PC-3 (cell line): ENCODE measurements at regions of chr17 and their contacts with region 1.

Region 1: GRCh38 chr17:72126563-72127486 is 6.0 kb downstream of the SOX9 start:
- DNase-seq: peak; percentile 91
- ATAC-seq: peak; percentile 44
- H3K4me3 ChIP-seq: no peak overlapping the region
- H3K27ac ChIP-seq: peak overlapping the region; percentile 66
- H3K4me1 ChIP-seq: peaks cover 39% of the 10 kb centered on the region
- H3K27me3 ChIP-seq: no peaks in the 10 kb centered on the region
- CTCF ChIP-seq: 0 out of 2 replicates have a peak, but pooled peaks have one; percentile 15

Region 2: DNA sequence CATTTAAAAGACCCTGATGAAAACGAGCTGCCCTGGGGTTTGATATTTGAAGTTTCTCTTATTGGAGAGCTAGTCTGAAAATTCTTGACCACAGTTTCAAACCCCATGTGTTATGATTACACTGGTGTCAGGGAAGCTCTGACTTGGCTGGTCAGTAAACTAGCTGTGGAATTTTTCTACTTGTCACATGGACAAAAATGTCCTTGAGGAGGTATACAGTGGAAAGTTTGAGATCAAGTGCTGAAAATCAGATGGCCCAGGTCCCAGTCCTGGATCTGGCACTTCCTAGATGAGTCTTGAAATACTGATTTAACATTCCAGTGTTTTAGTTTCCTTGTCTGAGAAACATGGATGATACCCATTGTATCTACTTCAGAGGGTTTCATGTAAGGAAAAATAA is 36.7 kb before region 1 on chr17:
- CTCF ChIA-PET with region 1: no interaction called
- POLR2A ChIA-PET with region 1: no interaction called
- intact Hi-C with region 1: no loop called
- DNase-seq: no peak
- ATAC-seq: no peak
- H3K4me3 ChIP-seq: no peak overlapping the region
- H3K27ac ChIP-seq: no peak overlapping the region
- H3K4me1 ChIP-seq: no peaks in the 10 kb centered on the region
- H3K27me3 ChIP-seq: no peaks in the 10 kb centered on the region
- CTCF ChIP-seq: no peak

Region 3: GRCh38 chr17:72151565-72152391 is 25.0 kb after region 1 on chr17:
- CTCF ChIA-PET with region 1: no interaction called
- POLR2A ChIA-PET with region 1: interaction called, 3 read pairs
- intact Hi-C with region 1: loop called (anchors 1 kb)
- DNase-seq: peak; percentile 97
- ATAC-seq: peak; percentile 92
- H3K4me3 ChIP-seq: peak overlapping the region; percentile 45
- H3K27ac ChIP-seq: peak overlapping the region; percentile 80
- H3K4me1 ChIP-seq: peaks cover 23% of the 10 kb centered on the region
- H3K27me3 ChIP-seq: no peaks in the 10 kb centered on the region
- CTCF ChIP-seq: no peak

Region 4: DNA sequence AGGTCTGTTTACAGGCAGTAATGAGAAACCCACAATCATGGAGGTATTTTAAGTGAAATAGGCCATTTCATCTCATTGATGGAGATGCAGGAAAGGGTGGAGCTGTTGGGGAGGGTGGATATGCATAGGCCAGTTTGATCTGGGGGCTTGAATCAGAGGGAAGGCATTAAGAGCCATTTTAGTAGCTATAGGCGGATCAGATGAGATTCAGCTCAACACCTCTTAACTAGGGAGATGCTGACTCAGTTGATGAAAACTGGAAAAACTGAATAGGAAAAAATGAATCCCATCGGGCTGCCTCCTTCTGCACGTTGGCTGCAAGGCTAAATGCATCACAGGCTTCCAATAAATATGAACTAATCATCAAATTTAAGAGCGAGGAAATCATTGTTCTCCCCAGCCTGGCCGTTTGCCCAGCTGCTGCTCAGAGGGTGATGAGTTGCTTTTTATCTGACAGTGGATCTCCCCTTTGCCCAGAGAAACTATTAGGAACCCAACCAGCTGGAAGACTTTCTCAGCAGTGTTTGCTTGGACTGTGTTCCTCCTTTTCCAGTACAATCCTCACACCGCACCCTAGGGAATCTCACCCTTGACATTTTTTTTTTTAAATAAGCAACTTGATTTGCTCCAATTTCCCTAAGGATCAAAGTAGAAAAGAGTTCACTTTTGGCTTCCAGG is 143.6 kb after region 1 on chr17:
- CTCF ChIA-PET with region 1: no interaction called
- POLR2A ChIA-PET with region 1: no interaction called
- intact Hi-C with region 1: loop called (anchors 1 kb)
- DNase-seq: peak; percentile 98
- ATAC-seq: peak; percentile 96
- H3K4me3 ChIP-seq: peak overlapping the region; percentile 14; the same call in 1 of the 2 replicates
- H3K27ac ChIP-seq: peak overlapping the region; percentile 91
- H3K4me1 ChIP-seq: peaks cover 33% of the 10 kb centered on the region
- H3K27me3 ChIP-seq: no peaks in the 10 kb centered on the region
- CTCF ChIP-seq: no peak

Region 5: DNA sequence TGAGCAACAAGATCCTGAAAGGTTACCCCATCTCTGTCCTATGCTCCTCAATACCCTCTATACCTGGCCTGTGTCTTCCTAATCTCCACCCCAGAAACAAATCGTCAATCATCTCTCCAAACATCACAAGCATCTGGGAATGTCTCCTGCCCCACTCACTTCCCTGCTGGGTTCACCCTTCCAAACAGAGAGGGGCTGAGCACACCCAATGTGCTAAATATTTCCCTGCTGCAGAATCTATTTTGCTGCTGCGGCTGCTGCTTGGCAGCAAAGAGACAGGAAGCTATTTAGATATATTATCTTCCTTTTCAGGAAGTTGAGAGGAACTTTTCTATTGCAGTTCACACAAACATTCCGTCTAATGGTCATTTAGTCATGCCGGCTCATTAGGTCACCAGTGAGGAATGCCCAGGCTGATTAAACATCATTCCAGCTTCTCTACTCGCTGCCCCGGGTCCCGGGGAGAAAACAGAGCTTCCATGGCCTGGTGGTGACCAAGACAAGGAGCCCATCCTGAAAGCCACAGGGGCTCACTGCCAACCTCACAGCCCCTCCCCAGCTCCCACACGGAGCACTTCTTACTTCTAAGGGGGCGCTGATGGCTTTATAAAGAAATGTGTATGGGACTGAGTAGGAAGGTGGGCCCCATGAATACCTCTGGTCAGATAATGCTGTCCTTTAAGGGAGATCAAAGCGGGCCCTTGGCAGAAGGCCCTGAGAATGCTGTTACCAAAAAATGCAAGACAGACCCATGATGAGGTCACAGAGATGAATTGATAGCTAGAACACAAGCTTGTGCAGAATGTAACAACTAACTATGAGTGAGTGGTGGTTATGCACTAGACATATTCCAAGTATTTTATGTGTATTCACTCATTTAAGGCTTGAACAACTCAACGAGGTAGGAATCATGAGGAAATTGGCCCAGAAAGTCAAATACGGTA is 212.3 kb after region 1 on chr17:
- CTCF ChIA-PET with region 1: no interaction called
- POLR2A ChIA-PET with region 1: interaction called, 4 read pairs
- intact Hi-C with region 1: loop called (anchors 2 kb)
- DNase-seq: peak; percentile 97
- ATAC-seq: peak; percentile 93
- H3K4me3 ChIP-seq: peak overlapping the region; percentile 22; the same call in 1 of the 2 replicates
- H3K27ac ChIP-seq: peak overlapping the region; percentile 84
- H3K4me1 ChIP-seq: peaks cover 26% of the 10 kb centered on the region
- H3K27me3 ChIP-seq: no peaks in the 10 kb centered on the region
- CTCF ChIP-seq: no peak

Region 6: DNA sequence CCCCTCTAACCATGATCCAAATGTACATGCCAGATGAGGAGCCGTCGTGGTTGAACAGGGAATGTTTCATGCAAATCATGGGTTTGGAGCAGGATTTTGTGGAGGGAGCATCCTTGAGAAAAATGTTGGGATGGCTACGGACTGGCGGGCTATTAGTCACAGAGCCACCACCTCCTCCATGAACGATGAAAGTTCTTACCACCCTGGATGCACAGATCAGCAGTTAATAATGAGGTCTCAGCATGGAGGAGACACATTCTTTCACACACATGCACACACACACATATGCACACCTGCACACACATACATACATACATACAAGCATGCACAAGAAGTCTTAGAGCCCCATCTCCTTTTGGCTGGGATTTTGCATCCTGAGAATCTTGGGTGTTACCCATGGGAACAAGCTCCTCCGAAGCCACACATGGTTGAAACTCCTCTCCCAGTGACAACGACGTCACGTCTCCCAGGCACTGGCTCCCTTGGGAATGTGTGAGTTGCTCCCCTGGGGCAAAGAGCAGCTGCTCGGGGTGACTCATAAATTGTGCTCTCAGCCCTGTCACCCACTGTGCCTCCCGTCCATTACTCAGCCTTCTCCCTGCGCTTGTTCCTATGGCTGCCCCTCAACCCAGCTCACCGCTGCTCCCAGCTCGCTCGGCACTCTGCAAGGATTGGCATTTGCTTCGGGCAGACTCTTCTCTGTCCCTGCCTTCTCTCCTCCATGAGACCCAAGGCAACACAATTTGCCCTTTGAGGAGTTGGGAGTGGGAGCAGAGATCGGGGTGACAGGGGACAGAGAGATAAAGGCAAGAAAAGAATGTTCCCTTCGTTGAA is 338.6 kb after region 1 on chr17:
- CTCF ChIA-PET with region 1: interaction called, 4 read pairs
- POLR2A ChIA-PET with region 1: interaction called, 13 read pairs
- intact Hi-C with region 1: loop called (anchors 1 kb)
- DNase-seq: peak; percentile 99
- ATAC-seq: peak; percentile 89
- H3K4me3 ChIP-seq: peak overlapping the region; percentile 66
- H3K27ac ChIP-seq: peak overlapping the region; percentile 96
- H3K4me1 ChIP-seq: peaks cover 54% of the 10 kb centered on the region
- H3K27me3 ChIP-seq: no peaks in the 10 kb centered on the region
- CTCF ChIP-seq: no peak